Heart left ventricle (tissue), 16 donors: ENCODE measurements at regions of chr19 and their contacts with region 1.

Region 1: GRCh38 chr19:37403403-37403802 is 32.5 kb downstream of the ZNF527 start:
- DNase-seq: no peak
- ATAC-seq: no peak
- H3K4me3 ChIP-seq: no peak overlapping the region
- H3K27ac ChIP-seq: no peak overlapping the region
- H3K4me1 ChIP-seq: no peaks in the 10 kb centered on the region
- H3K27me3 ChIP-seq: no peaks in the 10 kb centered on the region
- CTCF ChIP-seq: no peak
- POLR2A ChIP-seq: no peak

Region 2: DNA sequence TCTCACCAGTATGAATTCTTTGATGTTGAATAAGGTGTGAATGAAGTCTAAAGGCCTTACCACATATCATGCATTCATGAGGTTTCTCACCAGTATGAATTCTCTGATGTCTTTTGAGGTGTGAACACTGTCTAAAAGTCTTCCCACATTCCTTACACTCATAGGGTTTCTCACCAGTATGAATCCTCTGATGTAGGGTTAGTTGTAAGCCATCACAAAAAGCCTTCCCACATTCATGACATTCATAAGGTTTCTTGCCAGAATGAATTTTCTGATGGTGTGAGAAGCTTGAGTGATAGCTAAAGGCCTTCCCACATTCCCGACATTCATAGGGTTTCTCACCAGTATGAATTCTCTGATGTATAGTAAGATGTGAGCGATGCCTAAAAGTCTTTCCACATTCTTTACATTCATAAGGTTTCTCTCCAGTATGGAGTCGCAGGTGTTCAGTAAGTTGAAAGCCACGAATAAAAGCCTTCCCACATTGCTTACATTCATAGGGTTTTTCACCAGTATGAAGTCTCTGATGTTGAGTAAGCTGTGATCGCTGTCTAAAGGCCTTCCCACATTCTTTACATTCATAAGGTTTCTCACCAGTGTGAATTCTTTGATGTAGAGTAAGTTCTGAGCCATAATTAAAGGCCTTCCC is 764.4 kb before region 1 on chr19:
- intact Hi-C with region 1: loop called in 2 of 10 experiments (anchors 10 kb)
- DNase-seq: no peak
- ATAC-seq: no peak
- H3K4me3 ChIP-seq: no peak overlapping the region
- H3K27ac ChIP-seq: no peak overlapping the region
- H3K4me1 ChIP-seq: no peaks in the 10 kb centered on the region
- H3K27me3 ChIP-seq: no peaks in the 10 kb centered on the region
- CTCF ChIP-seq: no peak
- POLR2A ChIP-seq: no peak

Region 3: GRCh38 chr19:36646746-36647145 is 756.7 kb before region 1 on chr19:
- intact Hi-C with region 1: loop called in 1 of 10 experiments (anchors 10 kb)
- DNase-seq: no peak
- ATAC-seq: no peak
- H3K4me3 ChIP-seq: no peak overlapping the region
- H3K27ac ChIP-seq: no peak overlapping the region
- H3K4me1 ChIP-seq: no peaks in the 10 kb centered on the region
- H3K27me3 ChIP-seq: no peaks in the 10 kb centered on the region
- CTCF ChIP-seq: no peak
- POLR2A ChIP-seq: no peak